ENCODE measurements at regions of chr1 and their contacts with region 1.

Region 1: GRCh38 chr1:2044510-2045319 is 5.5 kb upstream of the PRKCZ start:
- DNase-seq: peak in 1 of 2 donors; percentile 50
- H3K4me3 ChIP-seq: peak overlapping the region in 1 of 2 donors; percentile 18
- H3K27ac ChIP-seq: no peak overlapping the region
- H3K4me1 ChIP-seq: peaks cover 0 to 15% (median 10%) of the 10 kb centered on the region in 4 donors
- H3K27me3 ChIP-seq: peaks cover 0 to 94% of the 10 kb centered on the region in 2 donors
- CTCF ChIP-seq: peak; percentile 72 to 77

Region 2: GRCh38 chr1:1959840-1960479 is 84.8 kb before region 1 on chr1:
- intact Hi-C with region 1: loop called (anchors 5 kb)
- DNase-seq: peak; percentile 49 to 76
- H3K4me3 ChIP-seq: no peak overlapping the region
- H3K27ac ChIP-seq: no peak overlapping the region
- H3K4me1 ChIP-seq: peaks cover 0 to 12% (median 8%) of the 10 kb centered on the region in 4 donors
- H3K27me3 ChIP-seq: peaks cover 0 to 94% of the 10 kb centered on the region in 2 donors
- CTCF ChIP-seq: peak; percentile 33 to 44

Measured in tibial artery (tissue), 4 donors.